ENCODE measurements at regions of chr15 and their contacts with region 1.

Region 1: DNA sequence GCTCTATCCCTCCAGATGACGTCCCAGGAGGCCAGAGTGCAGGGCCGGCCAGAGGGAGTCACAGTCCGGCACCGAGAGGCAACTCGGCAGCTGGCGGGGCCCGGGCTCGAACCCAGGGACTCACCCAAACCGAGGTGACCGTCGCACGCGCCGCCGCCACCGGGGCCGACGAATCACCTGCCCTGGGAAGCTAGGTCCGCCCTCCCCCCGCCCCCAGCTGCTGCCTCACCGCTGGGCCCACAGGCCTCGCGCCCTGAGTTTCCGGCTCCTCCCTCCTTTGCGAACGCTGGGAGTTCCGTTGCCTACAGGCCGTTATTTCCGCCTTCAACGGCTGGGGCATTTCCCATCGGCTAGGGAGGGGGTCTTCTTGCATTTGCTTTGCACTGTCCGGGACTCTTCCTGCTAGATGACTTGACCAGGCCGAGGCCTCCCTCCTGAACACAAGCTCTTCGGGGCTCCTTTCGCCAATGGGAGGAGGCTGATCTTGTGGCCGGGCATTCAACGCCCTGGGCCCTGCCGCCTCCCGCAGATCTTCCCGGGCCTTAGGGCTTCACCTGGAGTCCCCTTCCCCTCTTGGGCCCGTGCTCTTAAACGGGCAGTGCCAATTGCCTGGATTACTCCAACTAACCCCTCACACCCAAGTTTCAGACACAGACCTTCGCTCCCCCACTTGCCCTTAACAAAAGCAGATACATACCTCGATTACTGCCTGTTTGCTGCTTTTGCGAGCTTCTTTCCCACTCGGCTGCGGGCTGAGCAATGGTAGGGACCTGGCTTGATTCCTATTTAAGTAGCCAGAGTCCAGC is at the start of gene SNUPN:
- DNase-seq: peak; percentile 75 to 92 (median 88)
- ATAC-seq: peak; percentile 97
- H3K4me3 ChIP-seq: peak within 1 kb of the TSS; percentile 100
- H3K4me3 Mint-ChIP-seq: peak within 1 kb of the TSS; percentile 85 to 99 (median 92)
- H3K27ac ChIP-seq: peak within 1 kb of the TSS; percentile 97
- H3K27ac Mint-ChIP-seq: peak within 1 kb of the TSS; percentile 92 to 99 (median 96)
- H3K4me1 ChIP-seq: peaks cover 11 to 16% of the 10 kb centered on the region in 2 donors
- H3K4me1 Mint-ChIP-seq: peaks cover 22 to 41% (median 35%) of the 10 kb centered on the region in 7 donors
- H3K27me3 ChIP-seq: no peaks in the 10 kb centered on the region
- H3K27me3 Mint-ChIP-seq: no peaks in the 10 kb centered on the region
- total RNA-seq, gene SNUPN: 16.5 to 33.2 (median 21.5) TPM

Region 2: GRCh38 chr15:74695597-74696397 is 929.9 kb before region 1 on chr15 and contains the start of gene EDC3:
- CTCF ChIA-PET with region 1: no interaction called
- POLR2A ChIA-PET with region 1: no interaction called
- intact Hi-C with region 1: loop called in 1 of 2 experiments (anchors 5 kb)
- DNase-seq: peak; percentile 69 to 87 (median 84)
- ATAC-seq: peak; percentile 93
- H3K4me3 ChIP-seq: peak within 1 kb of the TSS; percentile 71
- H3K4me3 Mint-ChIP-seq: peak within 1 kb of the TSS; percentile 96 to 100 (median 100)
- H3K27ac ChIP-seq: peak within 1 kb of the TSS; percentile 86
- H3K27ac Mint-ChIP-seq: peak within 1 kb of the TSS; percentile 97 to 100 (median 99)
- H3K4me1 ChIP-seq: peaks cover 12 to 14% of the 10 kb centered on the region in 2 donors
- H3K4me1 Mint-ChIP-seq: peaks cover 27 to 54% (median 48%) of the 10 kb centered on the region in 7 donors
- H3K27me3 ChIP-seq: no peaks in the 10 kb centered on the region
- H3K27me3 Mint-ChIP-seq: peaks cover 0 to 3% (median 0%) of the 10 kb centered on the region in 5 donors
- total RNA-seq, gene EDC3: 29.0 to 45.3 (median 38.7) TPM

Region 3: DNA sequence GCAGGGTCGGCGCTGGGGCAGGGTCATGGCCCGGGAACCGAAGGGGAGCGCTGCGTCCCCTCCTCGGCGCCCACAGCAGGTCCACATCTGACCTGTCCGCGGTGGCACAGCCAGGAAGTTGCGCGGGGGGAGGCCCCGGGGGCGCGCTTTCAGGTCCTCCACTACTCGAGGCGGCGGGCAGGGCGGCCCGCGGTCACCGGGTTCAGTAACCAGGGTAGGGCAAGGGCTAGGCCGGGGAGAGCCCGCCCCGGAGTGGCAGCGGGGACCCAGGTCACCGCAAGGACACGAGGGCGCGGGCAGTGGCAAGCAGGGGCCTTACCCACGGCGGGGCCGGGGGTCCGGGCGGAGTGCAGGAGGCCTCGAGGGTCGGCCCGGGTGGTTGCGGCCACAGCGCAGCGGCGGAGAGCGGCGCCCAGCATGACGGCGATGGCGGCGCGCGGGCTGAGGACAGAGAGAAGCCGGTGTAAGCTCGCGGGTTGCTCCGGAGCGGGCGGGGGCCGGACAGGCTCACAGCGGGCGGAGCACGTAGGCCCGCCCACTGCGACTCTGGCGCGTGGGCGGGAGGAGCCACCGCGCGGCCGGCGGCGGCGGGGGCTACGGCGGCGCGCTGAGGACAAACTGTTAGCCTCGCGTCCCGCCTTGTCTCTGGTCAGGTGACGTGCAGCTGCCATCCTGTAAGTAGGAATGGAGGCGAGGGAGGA is 688.0 kb before region 1 on chr15 and contains the start of gene COX5A:
- CTCF ChIA-PET with region 1: no interaction called
- POLR2A ChIA-PET with region 1: no interaction called
- intact Hi-C with region 1: loop called in 1 of 2 experiments (anchors 1 kb)
- DNase-seq: peak; percentile 86 to 94 (median 92)
- ATAC-seq: peak; percentile 99
- H3K4me3 ChIP-seq: peak within 1 kb of the TSS; percentile 62
- H3K4me3 Mint-ChIP-seq: peak within 1 kb of the TSS; percentile 87 to 97 (median 94)
- H3K27ac ChIP-seq: peak within 1 kb of the TSS; percentile 85
- H3K27ac Mint-ChIP-seq: peak within 1 kb of the TSS; percentile 85 to 95 (median 91)
- H3K4me1 ChIP-seq: peaks cover 0 to 17% of the 10 kb centered on the region in 2 donors
- H3K4me1 Mint-ChIP-seq: peaks cover 16 to 38% (median 26%) of the 10 kb centered on the region in 7 donors
- H3K27me3 ChIP-seq: no peaks in the 10 kb centered on the region
- H3K27me3 Mint-ChIP-seq: peaks cover 0 to 3% (median 0%) of the 10 kb centered on the region in 5 donors
- total RNA-seq, gene COX5A: 44.4 to 210 (median 59.2) TPM

Region 4: GRCh38 chr15:75367913-75368688 is 257.6 kb before region 1 on chr15 and contains the start of gene MAN2C1:
- CTCF ChIA-PET with region 1: interaction called, 15 read pairs
- POLR2A ChIA-PET with region 1: interaction called, 41 read pairs
- intact Hi-C with region 1: loop called (anchors 1 kb)
- DNase-seq: peak; percentile 80 to 96 (median 87)
- ATAC-seq: peak; percentile 98
- H3K4me3 ChIP-seq: peak within 1 kb of the TSS; percentile 75
- H3K4me3 Mint-ChIP-seq: peak within 1 kb of the TSS; percentile 88 to 94 (median 92)
- H3K27ac ChIP-seq: peak within 1 kb of the TSS; percentile 93
- H3K27ac Mint-ChIP-seq: peak within 1 kb of the TSS; percentile 90 to 97 (median 94)
- H3K4me1 ChIP-seq: peaks cover 11 to 15% of the 10 kb centered on the region in 2 donors
- H3K4me1 Mint-ChIP-seq: peaks cover 8 to 28% (median 24%) of the 10 kb centered on the region in 7 donors
- H3K27me3 ChIP-seq: no peaks in the 10 kb centered on the region
- H3K27me3 Mint-ChIP-seq: no peaks in the 10 kb centered on the region
- total RNA-seq, gene MAN2C1: 298 to 557 (median 451) TPM

Region 5: GRCh38 chr15:75578948-75579920 is 46.5 kb before region 1 on chr15 and contains the start of gene PTPN9:
- CTCF ChIA-PET with region 1: no interaction called
- POLR2A ChIA-PET with region 1: interaction called, 9 read pairs
- intact Hi-C with region 1: loop called (anchors 1 kb)
- DNase-seq: peak; percentile 42 to 74 (median 61)
- ATAC-seq: peak; percentile 90
- H3K4me3 ChIP-seq: peak within 1 kb of the TSS; percentile 77
- H3K4me3 Mint-ChIP-seq: peak within 1 kb of the TSS; percentile 91 to 97 (median 94)
- H3K27ac ChIP-seq: peak within 1 kb of the TSS; percentile 78
- H3K27ac Mint-ChIP-seq: peak within 1 kb of the TSS; percentile 86 to 97 (median 90)
- H3K4me1 ChIP-seq: peaks cover 10 to 16% of the 10 kb centered on the region in 2 donors
- H3K4me1 Mint-ChIP-seq: peaks cover 13 to 27% (median 24%) of the 10 kb centered on the region in 7 donors
- H3K27me3 ChIP-seq: no peaks in the 10 kb centered on the region
- H3K27me3 Mint-ChIP-seq: no peaks in the 10 kb centered on the region
- total RNA-seq, gene PTPN9: 11.2 to 35.6 (median 15.7) TPM

Region 6: GRCh38 chr15:75606711-75607699 is 18.7 kb before region 1 on chr15:
- CTCF ChIA-PET with region 1: interaction called, 3 read pairs
- POLR2A ChIA-PET with region 1: interaction called, 19 read pairs
- intact Hi-C with region 1: loop called (anchors 1 to 2 kb)
- DNase-seq: peak in 7 of 9 donors; percentile 18 to 55 (median 50)
- ATAC-seq: peak; percentile 76
- H3K4me3 ChIP-seq: peak overlapping the region; percentile 17
- H3K4me3 Mint-ChIP-seq: peak overlapping the region; percentile 65 to 82 (median 73)
- H3K27ac ChIP-seq: peak overlapping the region; percentile 59
- H3K27ac Mint-ChIP-seq: peak overlapping the region; percentile 48 to 92 (median 84)
- H3K4me1 ChIP-seq: peaks cover 41 to 42% of the 10 kb centered on the region in 2 donors
- H3K4me1 Mint-ChIP-seq: peaks cover 40 to 52% (median 43%) of the 10 kb centered on the region in 7 donors
- H3K27me3 ChIP-seq: no peaks in the 10 kb centered on the region
- H3K27me3 Mint-ChIP-seq: no peaks in the 10 kb centered on the region

Region 7: DNA sequence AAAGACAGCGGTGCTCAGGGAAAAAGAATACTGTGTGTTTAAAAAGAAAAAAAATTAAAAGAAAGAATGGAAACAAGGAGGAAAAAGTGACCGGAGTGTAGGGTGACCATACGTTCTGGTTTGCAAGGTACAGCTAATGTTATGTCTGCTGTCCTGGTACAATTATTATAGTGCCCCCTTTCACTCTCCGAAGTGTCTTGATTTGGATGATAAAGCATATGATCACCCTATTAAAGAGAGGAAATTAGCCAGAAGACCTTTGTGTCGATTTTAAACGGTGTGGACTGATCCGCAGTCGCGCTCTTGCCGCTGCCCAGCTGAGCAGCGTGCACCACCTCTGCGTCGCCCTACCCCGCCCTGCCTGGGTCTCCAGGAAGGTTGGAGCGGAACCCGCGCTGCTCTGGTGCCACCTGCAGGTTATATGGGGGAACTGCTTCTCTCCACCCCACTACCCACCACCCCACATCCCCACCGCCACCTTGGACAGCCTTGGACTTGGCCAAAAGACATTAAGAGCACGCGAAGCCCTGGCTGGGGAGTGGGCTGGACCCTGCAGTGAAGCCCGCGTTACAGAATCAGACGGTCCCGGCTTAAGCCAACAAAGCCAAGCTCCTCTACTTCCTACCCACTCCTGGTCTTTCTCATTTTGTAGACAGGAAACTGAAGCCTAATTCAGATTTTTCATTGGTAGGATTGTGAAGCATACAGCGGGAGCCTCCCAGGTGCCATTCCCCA is 176.3 kb after region 1 on chr15:
- CTCF ChIA-PET with region 1: no interaction called
- POLR2A ChIA-PET with region 1: no interaction called
- intact Hi-C with region 1: no loop called
- DNase-seq: peak; percentile 58 to 82 (median 72)
- ATAC-seq: peak; percentile 100
- H3K4me3 ChIP-seq: no peak overlapping the region
- H3K4me3 Mint-ChIP-seq: peak overlapping the region in 9 of 10 donors; percentile 21 to 81 (median 58)
- H3K27ac ChIP-seq: no peak overlapping the region
- H3K27ac Mint-ChIP-seq: peak overlapping the region in 1 of 9 donors; percentile 76
- H3K4me1 ChIP-seq: no peaks in the 10 kb centered on the region
- H3K4me1 Mint-ChIP-seq: peaks cover 4 to 10% (median 7%) of the 10 kb centered on the region in 7 donors
- H3K27me3 ChIP-seq: no peaks in the 10 kb centered on the region
- H3K27me3 Mint-ChIP-seq: peaks cover 46 to 63% (median 49%) of the 10 kb centered on the region in 5 donors

Region 8: GRCh38 chr15:75842722-75843551 is 217.2 kb after region 1 on chr15 and contains the start of gene UBE2Q2:
- CTCF ChIA-PET with region 1: no interaction called
- POLR2A ChIA-PET with region 1: interaction called, 3 read pairs
- intact Hi-C with region 1: loop called in 1 of 2 experiments (anchors 5 kb)
- DNase-seq: peak; percentile 45 to 78 (median 67)
- ATAC-seq: peak; percentile 75
- H3K4me3 ChIP-seq: peak within 1 kb of the TSS; percentile 68
- H3K4me3 Mint-ChIP-seq: peak within 1 kb of the TSS; percentile 85 to 99 (median 96)
- H3K27ac ChIP-seq: peak within 1 kb of the TSS; percentile 76
- H3K27ac Mint-ChIP-seq: peak within 1 kb of the TSS; percentile 85 to 97 (median 92)
- H3K4me1 ChIP-seq: peaks cover 20 to 30% of the 10 kb centered on the region in 2 donors
- H3K4me1 Mint-ChIP-seq: peaks cover 37 to 50% (median 45%) of the 10 kb centered on the region in 7 donors
- H3K27me3 ChIP-seq: no peaks in the 10 kb centered on the region
- H3K27me3 Mint-ChIP-seq: peaks cover 0 to 20% (median 0%) of the 10 kb centered on the region in 5 donors
- total RNA-seq, gene UBE2Q2: 28.2 to 32.1 (median 28.8) TPM

Region 9: DNA sequence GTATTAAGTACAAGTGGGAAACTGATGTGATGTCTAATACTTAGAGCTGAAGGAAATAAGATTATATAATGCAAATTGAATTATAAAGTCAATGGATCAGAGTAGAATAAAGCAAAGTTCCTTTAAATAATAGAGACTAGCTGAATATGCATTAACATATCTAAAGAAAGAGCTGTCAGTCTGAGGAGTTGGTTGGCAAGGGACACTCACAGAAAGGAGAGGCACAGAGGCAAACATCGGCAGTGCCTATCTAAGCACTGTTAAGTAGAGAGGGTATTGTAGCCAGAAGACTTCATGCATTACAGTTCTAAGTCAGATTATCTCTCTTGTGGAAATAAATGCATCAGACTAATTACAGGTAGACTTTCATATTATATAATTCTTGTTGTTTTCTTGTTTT is 369.9 kb after region 1 on chr15:
- CTCF ChIA-PET with region 1: no interaction called
- POLR2A ChIA-PET with region 1: no interaction called
- intact Hi-C with region 1: no loop called
- DNase-seq: no peak
- ATAC-seq: no peak
- H3K4me3 ChIP-seq: no peak overlapping the region
- H3K4me3 Mint-ChIP-seq: no peak overlapping the region
- H3K27ac ChIP-seq: no peak overlapping the region
- H3K27ac Mint-ChIP-seq: no peak overlapping the region
- H3K4me1 ChIP-seq: no peaks in the 10 kb centered on the region
- H3K4me1 Mint-ChIP-seq: no peaks in the 10 kb centered on the region
- H3K27me3 ChIP-seq: peaks cover 0 to 3% of the 10 kb centered on the region in 2 donors
- H3K27me3 Mint-ChIP-seq: peaks cover 0 to 30% (median 29%) of the 10 kb centered on the region in 5 donors